ENCODE measurements at regions of chr2 and their contacts with region 1.

Region 1: GRCh38 chr2:37344453-37345361 is at the start of gene QPCT:
- DNase-seq: no peak
- ATAC-seq: peak; percentile 24; the same call in 1 of the 2 replicates
- H3K4me3 ChIP-seq: peak within 1 kb of the TSS; percentile 31
- H3K27ac ChIP-seq: no peak within 1 kb of the TSS
- H3K4me1 ChIP-seq: no peaks in the 10 kb centered on the region
- H3K27me3 ChIP-seq: no peaks in the 10 kb centered on the region
- CTCF ChIP-seq: no peak
- total RNA-seq, gene QPCT: not detected in 2 replicates

Region 2: GRCh38 chr2:37365669-37366068 is 21.0 kb after region 1 on chr2:
- CTCF ChIA-PET with region 1: no interaction called
- POLR2A ChIA-PET with region 1: no interaction called
- intact Hi-C with region 1: no loop called
- DNase-seq: peak; percentile 82
- ATAC-seq: peak; percentile 51
- H3K4me3 ChIP-seq: no peak overlapping the region
- H3K27ac ChIP-seq: no peak overlapping the region
- H3K4me1 ChIP-seq: peaks cover 16% of the 10 kb centered on the region
- H3K27me3 ChIP-seq: no peaks in the 10 kb centered on the region
- CTCF ChIP-seq: no peak

Region 3: DNA sequence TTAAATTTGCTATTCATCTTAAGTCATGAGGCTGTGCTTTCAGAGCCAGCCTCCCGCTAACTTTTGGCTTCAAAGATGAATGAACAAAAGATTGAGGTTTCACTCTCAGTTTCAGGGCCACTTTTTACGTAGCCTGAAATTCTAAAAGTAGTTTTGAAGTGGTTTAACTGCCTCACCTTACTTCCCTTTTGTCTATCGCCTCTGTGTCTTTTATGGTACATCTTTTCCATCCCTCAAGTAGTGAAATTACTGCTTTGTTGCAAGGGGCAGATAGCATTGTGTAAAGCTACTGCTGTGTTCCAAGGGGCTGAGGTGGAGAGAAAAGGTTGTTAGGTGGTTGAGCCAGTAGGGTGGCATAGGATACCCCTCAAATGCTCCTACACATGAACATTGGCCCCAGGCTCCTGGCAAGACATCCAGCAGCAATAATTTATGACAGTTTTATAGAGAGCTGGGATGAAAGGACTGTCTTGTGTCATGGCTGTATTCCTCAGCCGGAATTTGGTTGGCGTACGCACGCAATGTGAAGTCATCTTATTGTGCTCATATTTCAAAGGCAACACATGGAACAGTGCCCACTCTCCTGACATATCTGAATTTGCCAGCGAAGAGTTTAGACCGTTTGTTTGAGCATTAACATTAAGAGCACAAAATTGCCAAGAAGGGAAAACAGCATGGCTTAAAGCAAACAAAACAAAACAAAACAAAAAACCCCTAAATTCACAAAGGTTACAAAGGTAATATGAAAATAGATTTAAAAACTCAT is 31.9 kb after region 1 on chr2:
- CTCF ChIA-PET with region 1: no interaction called
- POLR2A ChIA-PET with region 1: no interaction called
- intact Hi-C with region 1: loop called (anchors 5 kb)
- DNase-seq: peak; percentile 95
- ATAC-seq: peak; percentile 80
- H3K4me3 ChIP-seq: peak overlapping the region; percentile 48
- H3K27ac ChIP-seq: peak overlapping the region; percentile 76
- H3K4me1 ChIP-seq: peaks cover 45% of the 10 kb centered on the region
- H3K27me3 ChIP-seq: no peaks in the 10 kb centered on the region
- CTCF ChIP-seq: no peak

Region 4: DNA sequence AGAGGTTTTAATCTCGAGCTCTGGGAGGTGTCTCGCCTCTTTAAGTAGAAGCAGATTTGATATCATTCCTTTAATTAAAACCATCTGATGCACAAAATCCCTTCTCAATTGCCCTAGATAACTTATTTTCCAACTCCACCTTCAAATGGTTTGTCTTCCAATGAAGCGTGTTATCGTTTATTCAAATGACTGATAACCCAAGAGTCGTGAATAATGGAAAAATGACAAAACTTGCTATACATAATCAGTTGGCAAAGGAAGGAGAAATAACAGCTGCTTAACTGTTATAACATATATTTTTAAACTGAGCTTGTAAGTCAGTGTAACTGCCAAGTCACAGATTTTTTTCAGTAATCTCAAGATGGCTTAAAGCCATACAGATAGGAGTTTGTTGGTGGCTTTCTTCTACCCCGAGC is 144.3 kb after region 1 on chr2:
- CTCF ChIA-PET with region 1: no interaction called
- POLR2A ChIA-PET with region 1: no interaction called
- intact Hi-C with region 1: no loop called
- DNase-seq: no peak
- ATAC-seq: no peak
- H3K4me3 ChIP-seq: no peak overlapping the region
- H3K27ac ChIP-seq: no peak overlapping the region
- H3K4me1 ChIP-seq: no peaks in the 10 kb centered on the region
- H3K27me3 ChIP-seq: no peaks in the 10 kb centered on the region
- CTCF ChIP-seq: no peak

Measured in PC-3 (cell line).